CD4-positive, alpha-beta T cell (primary cell): ENCODE measurements at regions of chr19 and their contacts with region 1.

Region 1: GRCh38 chr19:2867025-2867991 is at the start of gene ZNF556:
- DNase-seq: no peak
- ATAC-seq: no peak
- H3K4me3 ChIP-seq: no peak within 1 kb of the TSS
- H3K4me3 Mint-ChIP-seq: no peak within 1 kb of the TSS
- H3K27ac ChIP-seq: no peak within 1 kb of the TSS
- H3K27ac Mint-ChIP-seq: no peak within 1 kb of the TSS
- H3K4me1 ChIP-seq: peaks cover 2% of the 10 kb centered on the region
- H3K4me1 Mint-ChIP-seq: peaks cover 7% of the 10 kb centered on the region
- H3K27me3 ChIP-seq: peaks cover 0 to 3% of the 10 kb centered on the region in 2 experiments
- H3K27me3 Mint-ChIP-seq: peaks cover 10% of the 10 kb centered on the region
- CTCF ChIP-seq: no peak
- total RNA-seq, gene ZNF556: not detected

Region 2: GRCh38 chr19:2648528-2648937 is 218.8 kb before region 1 on chr19:
- CTCF ChIA-PET with region 1: interaction called, 6 read pairs
- POLR2A ChIA-PET with region 1: no interaction called
- intact Hi-C with region 1: loop called (anchors 1 to 2 kb)
- DNase-seq: peak; percentile 55 to 86 (median 72)
- ATAC-seq: peak; percentile 95
- H3K4me3 ChIP-seq: no peak overlapping the region
- H3K4me3 Mint-ChIP-seq: no peak overlapping the region
- H3K27ac ChIP-seq: no peak overlapping the region
- H3K27ac Mint-ChIP-seq: no peak overlapping the region
- H3K4me1 ChIP-seq: no peaks in the 10 kb centered on the region
- H3K4me1 Mint-ChIP-seq: no peaks in the 10 kb centered on the region
- H3K27me3 ChIP-seq: no peaks in the 10 kb centered on the region
- H3K27me3 Mint-ChIP-seq: no peaks in the 10 kb centered on the region
- CTCF ChIP-seq: peak; percentile 87

Region 3: DNA sequence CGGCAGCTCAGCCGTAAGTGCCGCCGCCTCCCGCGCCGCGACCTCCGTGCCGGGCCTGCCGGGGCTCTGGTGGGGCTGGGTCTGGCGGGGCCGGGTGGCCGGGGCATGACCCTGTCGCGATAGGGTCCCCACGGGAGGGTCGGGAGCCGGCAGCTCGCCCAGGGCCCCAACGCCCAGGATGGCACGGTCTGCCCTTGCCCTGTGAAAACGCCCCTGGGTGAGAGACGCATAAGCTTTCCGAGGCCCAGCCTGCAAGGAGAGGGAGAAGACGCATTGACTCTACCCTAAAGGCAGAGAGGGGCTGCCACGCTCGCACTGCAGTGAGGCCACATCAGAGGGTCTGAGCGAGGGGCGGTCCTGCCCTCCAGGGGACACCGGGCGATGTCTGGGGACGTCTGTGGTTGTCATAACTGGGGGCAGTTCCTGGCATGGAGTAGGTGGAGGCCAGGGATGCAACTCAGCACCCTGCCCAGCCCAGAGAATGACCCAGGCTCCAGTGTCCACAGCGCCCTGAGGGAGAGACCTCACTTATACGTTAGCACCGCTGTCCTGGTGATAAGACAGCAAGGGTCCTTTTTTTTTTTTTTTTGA is 47.1 kb before region 1 on chr19:
- CTCF ChIA-PET with region 1: no interaction called
- POLR2A ChIA-PET with region 1: no interaction called
- intact Hi-C with region 1: loop called in 1 of 2 experiments (anchors 5 kb)
- DNase-seq: peak in 1 of 14 experiments; percentile 15
- ATAC-seq: peak; percentile 5
- H3K4me3 ChIP-seq: peak overlapping the region; percentile 69
- H3K4me3 Mint-ChIP-seq: peak overlapping the region; percentile 84
- H3K27ac ChIP-seq: no peak overlapping the region
- H3K27ac Mint-ChIP-seq: no peak overlapping the region
- H3K4me1 ChIP-seq: peaks cover 17% of the 10 kb centered on the region
- H3K4me1 Mint-ChIP-seq: peaks cover 8% of the 10 kb centered on the region
- H3K27me3 ChIP-seq: no peaks in the 10 kb centered on the region
- H3K27me3 Mint-ChIP-seq: no peaks in the 10 kb centered on the region
- CTCF ChIP-seq: no peak